HepG2 (cell line): ENCODE measurements at regions of chr7 and their contacts with region 1.

Region 1: GRCh38 chr7:2886900-2887299 is 42.8 kb upstream of the GNA12 start:
- DNase-seq: peak; percentile 66
- ATAC-seq: peak; percentile 83
- H3K4me3 ChIP-seq: no peak overlapping the region
- H3K27ac ChIP-seq: no peak overlapping the region
- H3K4me1 ChIP-seq: no peaks in the 10 kb centered on the region
- H3K27me3 ChIP-seq: peaks cover 4 to 20% of the 10 kb centered on the region in 2 experiments; a peak in 4 of 5 replicates
- CTCF ChIP-seq: peak; percentile 93
- EP300 ChIP-seq: no peak
- POLR2A ChIP-seq: no peak
- RAD21 ChIP-seq: peak; percentile 78

Region 2: GRCh38 chr7:2863461-2864066 is 23.3 kb before region 1 on chr7:
- CTCF ChIA-PET with region 1: no interaction called
- POLR2A ChIA-PET with region 1: no interaction called
- in situ Hi-C with region 1: no loop called
- intact Hi-C with region 1: no loop called
- DNase-seq: peak; percentile 89
- ATAC-seq: peak; percentile 97
- H3K4me3 ChIP-seq: peak overlapping the region; percentile 58 to 74 (median 60)
- H3K27ac ChIP-seq: peak overlapping the region; percentile 94
- H3K4me1 ChIP-seq: peaks cover 47% of the 10 kb centered on the region
- H3K27me3 ChIP-seq: no peaks in the 10 kb centered on the region
- CTCF ChIP-seq: 0 out of 2 replicates have a peak, but pooled peaks have one; percentile 30
- EP300 ChIP-seq: peak in 1 of 2 experiments; percentile 32; a peak in 1 of 4 replicates
- POLR2A ChIP-seq: peak; percentile 95 to 97
- RAD21 ChIP-seq: peak; percentile 22; the same call in 1 of the 2 replicates

Region 3: GRCh38 chr7:3154912-3155494 is 268.1 kb after region 1 on chr7:
- CTCF ChIA-PET with region 1: interaction called, 19 read pairs
- POLR2A ChIA-PET with region 1: no interaction called
- in situ Hi-C with region 1: loop called (anchors 5 kb)
- intact Hi-C with region 1: no loop called
- DNase-seq: peak; percentile 43
- ATAC-seq: peak; percentile 58; the same call in 2 of the 3 replicates
- H3K4me3 ChIP-seq: no peak overlapping the region
- H3K27ac ChIP-seq: no peak overlapping the region
- H3K4me1 ChIP-seq: no peaks in the 10 kb centered on the region
- H3K27me3 ChIP-seq: peaks cover 2 to 3% of the 10 kb centered on the region in 2 experiments; a peak in 1 of 5 replicates
- CTCF ChIP-seq: peak; percentile 74
- EP300 ChIP-seq: no peak
- POLR2A ChIP-seq: no peak
- RAD21 ChIP-seq: no peak; the same call in 1 of the 2 replicates

Region 4: DNA sequence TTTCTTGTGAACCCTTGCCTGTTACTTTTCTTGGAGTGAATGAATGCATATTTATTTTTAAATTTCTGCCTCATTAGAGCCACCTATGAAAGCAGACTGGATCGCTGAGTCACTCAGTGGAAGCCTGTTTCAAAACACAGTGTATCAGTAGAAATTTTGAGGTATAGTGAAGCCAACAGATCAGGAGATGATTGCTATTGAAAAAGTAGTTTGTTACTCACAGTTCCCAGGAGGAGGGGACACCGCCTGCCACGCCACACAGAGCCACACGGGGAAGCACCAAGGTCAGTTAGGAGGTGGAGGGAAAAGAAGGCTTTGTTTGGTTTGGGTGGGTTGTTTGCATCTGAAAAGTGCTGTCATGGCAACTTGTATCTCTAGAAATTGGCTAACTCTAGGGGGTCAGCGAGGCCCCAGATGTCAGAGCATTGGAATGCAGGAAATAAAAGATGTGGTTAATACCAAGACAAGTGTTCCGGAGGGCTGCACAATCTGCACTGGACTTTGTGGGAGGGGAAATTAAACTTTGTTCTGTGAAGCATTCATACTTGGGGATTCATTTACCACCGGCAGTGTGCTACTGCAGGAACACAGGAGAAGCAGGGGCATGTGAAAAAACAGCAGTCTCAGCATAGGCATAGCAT is 307.7 kb after region 1 on chr7:
- CTCF ChIA-PET with region 1: no interaction called
- POLR2A ChIA-PET with region 1: no interaction called
- in situ Hi-C with region 1: loop called (anchors 5 kb)
- intact Hi-C with region 1: no loop called
- DNase-seq: peak; percentile 97
- ATAC-seq: peak; percentile 97
- H3K4me3 ChIP-seq: peak overlapping the region in 1 of 3 experiments; percentile 41; a peak in 1 of 6 replicates
- H3K27ac ChIP-seq: peak overlapping the region; percentile 76
- H3K4me1 ChIP-seq: peaks cover 42% of the 10 kb centered on the region
- H3K27me3 ChIP-seq: no peaks in the 10 kb centered on the region
- CTCF ChIP-seq: peak; percentile 52
- EP300 ChIP-seq: peak in 1 of 2 experiments; percentile 61; a peak in 1 of 4 replicates
- POLR2A ChIP-seq: no peak
- RAD21 ChIP-seq: peak; percentile 30; the same call in 1 of the 2 replicates

Region 5: GRCh38 chr7:3399858-3400257 is 513.0 kb after region 1 on chr7:
- CTCF ChIA-PET with region 1: interaction called, 8 read pairs
- POLR2A ChIA-PET with region 1: no interaction called
- in situ Hi-C with region 1: loop called (anchors 25 kb)
- intact Hi-C with region 1: no loop called
- DNase-seq: peak; percentile 73
- ATAC-seq: peak; percentile 99
- H3K4me3 ChIP-seq: no peak overlapping the region
- H3K27ac ChIP-seq: no peak overlapping the region
- H3K4me1 ChIP-seq: peaks cover 9% of the 10 kb centered on the region; the same call in 1 of the 2 replicates
- H3K27me3 ChIP-seq: no peaks in the 10 kb centered on the region
- CTCF ChIP-seq: peak; percentile 64
- EP300 ChIP-seq: no peak
- POLR2A ChIP-seq: no peak
- RAD21 ChIP-seq: no peak

Region 6: DNA sequence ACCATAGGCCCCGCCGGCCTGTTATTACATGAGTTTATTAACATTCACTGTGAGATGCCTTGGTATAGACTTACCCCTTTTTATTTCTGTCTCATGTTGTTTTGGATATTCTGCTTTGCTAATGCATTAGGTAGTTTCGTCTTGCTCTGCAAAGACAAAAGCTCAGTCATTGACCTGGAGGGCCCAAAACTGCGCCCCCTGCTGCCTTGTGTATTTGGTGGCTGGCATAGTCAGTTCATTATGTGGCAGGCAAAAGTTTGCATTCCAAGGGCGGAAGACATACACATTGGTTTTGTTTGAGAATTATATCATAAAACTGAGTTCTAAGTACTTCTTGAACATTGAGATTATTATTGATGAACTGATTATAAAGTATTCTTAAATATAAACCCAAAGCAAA is 786.6 kb after region 1 on chr7:
- CTCF ChIA-PET with region 1: no interaction called
- POLR2A ChIA-PET with region 1: no interaction called
- in situ Hi-C with region 1: loop called (anchors 25 kb)
- intact Hi-C with region 1: no loop called
- DNase-seq: peak; percentile 23
- ATAC-seq: no peak
- H3K4me3 ChIP-seq: no peak overlapping the region
- H3K27ac ChIP-seq: no peak overlapping the region
- H3K4me1 ChIP-seq: no peaks in the 10 kb centered on the region
- H3K27me3 ChIP-seq: no peaks in the 10 kb centered on the region
- CTCF ChIP-seq: peak; percentile 53
- EP300 ChIP-seq: no peak
- POLR2A ChIP-seq: no peak
- RAD21 ChIP-seq: no peak